Activated CD4-positive, alpha-beta T cell treated with anti-CD3 and anti-CD28 coated beads, Interleukin-2, amount 10 ng/mL, durations not matched to agents 24 days and 14 days (primary cell): ENCODE measurements at regions of chr3 and their contacts with region 1.

Region 1: DNA sequence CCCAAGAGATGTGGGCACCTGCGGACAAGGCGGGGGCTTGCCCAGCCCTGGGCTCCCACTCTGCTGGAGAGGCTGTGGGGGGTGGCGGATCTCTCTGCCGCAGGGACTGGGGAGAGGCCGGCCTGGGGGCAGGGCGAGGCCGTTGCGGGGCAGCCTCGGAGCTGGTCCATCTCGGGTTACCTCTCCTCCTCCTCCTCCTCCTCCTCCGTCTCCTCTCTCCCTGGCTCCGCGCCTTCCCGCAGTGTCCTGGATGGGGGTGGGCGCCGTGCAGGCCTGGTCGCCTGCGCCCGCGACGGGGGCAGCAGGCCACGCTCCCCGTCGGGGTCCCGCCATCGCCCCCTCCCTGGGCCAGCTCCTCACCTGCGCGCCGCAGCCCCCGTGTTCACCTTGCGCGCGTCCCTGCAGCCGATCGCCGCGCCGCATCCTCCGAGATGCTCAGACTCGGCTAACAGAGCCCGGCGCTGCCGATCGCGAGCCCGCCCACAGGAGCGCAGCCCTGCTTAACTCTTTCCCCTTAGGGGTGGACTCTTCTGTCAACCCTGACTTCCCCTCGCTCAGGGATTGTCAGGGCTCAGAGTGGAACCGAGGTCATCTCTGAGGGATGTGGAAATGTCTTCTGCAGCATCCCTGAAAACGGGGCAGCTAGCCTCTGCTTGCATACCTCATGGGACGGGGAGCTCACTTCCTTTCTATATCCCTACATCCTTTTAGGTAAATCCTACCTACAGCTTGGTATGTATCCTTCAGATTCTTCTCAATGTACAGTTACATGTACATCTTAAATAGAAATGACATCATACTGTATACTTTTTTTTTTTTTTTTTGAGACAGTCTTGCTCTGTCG is at the start of gene PRRT3:
- DNase-seq: peak; percentile 90
- H3K4me3 Mint-ChIP-seq: peak within 1 kb of the TSS; percentile 83
- H3K27ac Mint-ChIP-seq: peak within 1 kb of the TSS; percentile 68
- H3K4me1 Mint-ChIP-seq: peaks cover 12% of the 10 kb centered on the region
- H3K27me3 Mint-ChIP-seq: no peaks in the 10 kb centered on the region
- total RNA-seq, gene PRRT3: 11.8 and 13.5 TPM in 2 replicates

Region 2: DNA sequence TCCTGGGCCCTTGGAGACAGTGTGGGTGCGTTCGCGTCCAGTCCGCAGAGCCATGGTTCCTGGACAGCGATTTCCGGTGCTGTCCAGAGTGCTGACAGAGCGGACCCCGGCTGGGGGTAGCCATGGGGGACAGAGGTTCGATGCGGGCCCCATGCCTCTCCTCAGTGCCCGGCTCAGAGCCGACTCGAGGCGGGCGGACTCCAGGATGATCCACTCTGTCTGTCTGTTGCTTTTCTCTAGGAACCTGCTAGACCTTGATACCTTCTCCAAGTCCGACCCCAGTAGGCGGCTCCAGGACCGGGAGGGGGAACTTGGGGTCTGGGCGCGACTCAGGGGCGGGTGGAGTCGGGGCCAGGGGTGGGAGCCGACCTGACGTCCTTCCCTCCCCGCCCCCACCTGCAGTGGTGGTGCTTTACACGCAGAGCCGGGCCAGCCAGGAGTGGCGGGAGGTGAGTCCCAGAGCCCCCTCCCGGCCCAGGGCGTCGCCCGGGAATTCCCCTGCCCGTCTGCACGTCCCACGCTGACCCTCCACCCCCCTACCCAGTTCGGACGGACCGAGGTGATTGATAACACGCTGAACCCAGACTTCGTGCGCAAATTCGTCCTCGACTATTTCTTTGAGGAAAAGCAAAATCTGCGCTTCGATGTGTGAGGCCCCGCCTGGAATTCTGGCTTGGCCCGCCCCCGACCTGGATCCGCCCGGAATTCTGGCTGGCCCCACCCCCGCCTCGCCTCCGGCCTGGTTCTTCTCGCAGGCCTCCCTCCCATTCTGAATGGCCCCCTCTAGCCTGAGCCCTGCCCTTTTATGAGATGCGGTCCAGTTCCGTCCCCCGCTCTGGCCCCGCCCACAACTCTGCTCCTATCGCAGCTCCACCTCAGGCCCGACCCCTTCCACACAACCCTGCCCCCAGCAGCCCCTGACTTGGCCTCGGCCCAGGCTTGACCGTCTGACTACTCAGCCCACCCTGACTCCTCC is 247.5 kb before region 1 on chr3:
- intact Hi-C with region 1: no loop called
- DNase-seq: peak; percentile 72
- H3K4me3 Mint-ChIP-seq: peak overlapping the region; percentile 69
- H3K27ac Mint-ChIP-seq: no peak overlapping the region
- H3K4me1 Mint-ChIP-seq: peaks cover 2% of the 10 kb centered on the region
- H3K27me3 Mint-ChIP-seq: peaks cover 41% of the 10 kb centered on the region

Region 3: GRCh38 chr3:9843715-9844438 is 108.3 kb before region 1 on chr3 and contains the start of gene RPUSD3:
- intact Hi-C with region 1: loop called (anchors 5 kb)
- DNase-seq: peak; percentile 99
- H3K4me3 Mint-ChIP-seq: peak within 1 kb of the TSS; percentile 99
- H3K27ac Mint-ChIP-seq: peak within 1 kb of the TSS; percentile 98
- H3K4me1 Mint-ChIP-seq: peaks cover 26% of the 10 kb centered on the region
- H3K27me3 Mint-ChIP-seq: no peaks in the 10 kb centered on the region
- total RNA-seq, gene RPUSD3: 84.3 and 85.7 TPM in 2 replicates

Region 4: DNA sequence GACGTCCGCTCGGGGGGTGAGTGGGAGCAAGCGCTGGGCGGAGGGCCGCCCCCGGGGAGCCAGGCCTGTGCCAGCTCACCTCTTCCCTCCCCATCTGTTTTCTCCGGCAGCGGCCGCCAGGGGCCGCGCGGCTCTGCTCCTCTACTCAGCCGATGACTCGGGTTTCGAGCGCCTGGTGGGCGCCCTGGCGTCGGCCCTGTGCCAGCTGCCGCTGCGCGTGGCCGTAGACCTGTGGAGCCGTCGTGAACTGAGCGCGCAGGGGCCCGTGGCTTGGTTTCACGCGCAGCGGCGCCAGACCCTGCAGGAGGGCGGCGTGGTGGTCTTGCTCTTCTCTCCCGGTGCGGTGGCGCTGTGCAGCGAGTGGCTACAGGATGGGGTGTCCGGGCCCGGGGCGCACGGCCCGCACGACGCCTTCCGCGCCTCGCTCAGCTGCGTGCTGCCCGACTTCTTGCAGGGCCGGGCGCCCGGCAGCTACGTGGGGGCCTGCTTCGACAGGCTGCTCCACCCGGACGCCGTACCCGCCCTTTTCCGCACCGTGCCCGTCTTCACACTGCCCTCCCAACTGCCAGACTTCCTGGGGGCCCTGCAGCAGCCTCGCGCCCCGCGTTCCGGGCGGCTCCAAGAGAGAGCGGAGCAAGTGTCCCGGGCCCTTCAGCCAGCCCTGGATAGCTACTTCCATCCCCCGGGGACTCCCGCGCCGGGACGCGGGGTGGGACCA is 19.2 kb before region 1 on chr3:
- intact Hi-C with region 1: no loop called
- DNase-seq: peak; percentile 94
- H3K4me3 Mint-ChIP-seq: peak overlapping the region; percentile 96
- H3K27ac Mint-ChIP-seq: peak overlapping the region; percentile 96
- H3K4me1 Mint-ChIP-seq: peaks cover 36% of the 10 kb centered on the region
- H3K27me3 Mint-ChIP-seq: no peaks in the 10 kb centered on the region